Transverse colon (tissue), 4 donors: ENCODE measurements at regions of chr2 and their contacts with region 1.

Region 1: DNA sequence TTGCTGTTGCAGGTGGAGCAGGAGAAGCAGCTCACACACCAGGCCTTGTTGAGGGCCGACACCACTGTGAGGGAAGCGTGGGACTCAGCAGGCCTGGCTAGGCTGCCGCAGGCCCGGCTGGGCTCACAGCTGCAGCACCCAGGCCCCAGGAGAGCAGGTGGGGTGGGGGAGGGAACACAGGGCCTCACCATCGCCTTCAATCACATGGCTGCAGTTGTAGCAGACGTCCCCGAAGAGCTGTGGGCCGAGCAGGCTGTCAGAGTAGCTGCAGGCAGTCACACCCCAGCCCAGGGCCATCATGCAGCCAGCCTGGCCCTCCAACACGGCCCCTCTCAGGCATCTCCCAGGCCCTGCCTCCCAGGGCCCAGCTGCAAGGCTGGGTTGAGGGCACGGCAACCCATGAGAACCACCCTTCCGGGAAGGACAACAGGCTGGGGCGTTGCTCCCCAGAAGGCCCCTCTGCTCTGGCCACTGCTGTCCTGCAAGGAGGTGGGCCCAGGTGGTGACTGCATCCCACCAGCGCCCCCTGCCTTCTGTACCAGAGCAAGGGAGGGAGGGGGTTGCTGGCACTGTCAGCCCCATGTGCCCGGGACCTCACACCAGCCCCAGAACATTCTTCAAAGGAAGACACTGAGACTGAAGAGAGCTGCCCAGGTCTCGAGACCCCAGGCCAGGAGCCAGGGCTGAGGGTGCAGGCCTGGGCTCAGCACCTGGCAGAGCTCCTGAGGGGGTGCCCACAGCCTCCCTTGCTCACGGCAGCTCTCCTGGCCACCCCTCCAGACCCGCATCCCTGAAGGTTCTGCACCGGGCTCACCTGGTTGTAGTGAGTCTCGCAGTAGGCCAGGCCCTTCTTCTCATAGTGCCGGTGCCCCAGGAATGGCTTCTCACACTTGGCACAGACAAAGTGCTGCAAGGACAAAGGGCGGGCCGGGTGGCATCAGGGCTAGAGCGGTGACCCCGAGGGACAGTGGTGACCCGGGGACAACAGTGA is 5.6 kb upstream of the GPR17 start:
- DNase-seq: no peak
- H3K4me3 ChIP-seq: no peak overlapping the region
- H3K27ac ChIP-seq: peak overlapping the region in 3 of 4 donors; percentile 45 to 83 (median 52)
- H3K4me1 ChIP-seq: peaks cover 2 to 26% (median 12%) of the 10 kb centered on the region in 4 donors
- H3K27me3 ChIP-seq: no peaks in the 10 kb centered on the region
- CTCF ChIP-seq: no peak
- EP300 ChIP-seq: no peak
- POLR2A ChIP-seq: no peak

Region 2: DNA sequence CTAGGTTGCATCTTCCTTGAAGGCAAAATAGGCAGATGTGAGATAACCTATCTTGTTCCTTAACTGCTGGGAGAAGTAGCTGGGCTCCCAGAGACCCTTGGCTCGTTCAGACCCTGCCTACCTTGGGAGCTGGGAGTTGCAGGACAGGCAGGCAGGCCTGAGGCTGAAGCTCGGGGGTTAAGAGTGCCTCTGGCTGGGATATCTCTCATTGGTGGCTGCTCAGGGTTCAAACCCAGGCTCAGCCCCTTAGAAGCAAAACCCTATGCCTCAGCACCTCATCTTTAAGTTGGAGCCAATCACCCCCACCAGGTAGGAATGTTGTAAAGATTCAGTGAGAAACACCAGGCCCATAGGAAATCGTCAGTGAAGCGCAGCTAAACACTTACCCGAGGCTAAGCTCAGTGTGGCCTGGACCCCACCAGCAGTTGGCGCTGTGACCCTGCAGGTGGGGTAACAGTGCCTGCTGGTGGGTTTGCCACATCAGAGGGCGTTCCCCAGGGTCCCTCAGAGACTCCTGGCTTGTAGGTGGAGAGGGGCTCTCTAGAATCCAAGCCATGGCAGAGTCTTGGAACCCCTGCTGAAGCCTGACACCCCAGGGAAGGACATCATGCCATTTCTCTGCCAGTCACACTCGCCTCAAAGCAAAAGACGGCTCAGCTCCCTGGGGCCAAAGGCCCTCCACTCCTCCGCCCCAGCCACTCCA is 49.0 kb before region 1 on chr2:
- in situ Hi-C with region 1: no loop called
- intact Hi-C with region 1: no loop called
- DNase-seq: peak; percentile 41
- H3K4me3 ChIP-seq: no peak overlapping the region
- H3K27ac ChIP-seq: no peak overlapping the region
- H3K4me1 ChIP-seq: no peaks in the 10 kb centered on the region
- H3K27me3 ChIP-seq: no peaks in the 10 kb centered on the region
- CTCF ChIP-seq: peak; percentile 47 to 78 (median 63)
- EP300 ChIP-seq: no peak
- POLR2A ChIP-seq: no peak

Region 3: GRCh38 chr2:127701193-127701650 is 60.8 kb after region 1 on chr2 and contains the start of gene SFT2D3:
- in situ Hi-C with region 1: no loop called
- intact Hi-C with region 1: loop called (anchors 1 kb)
- DNase-seq: peak; percentile 95
- H3K4me3 ChIP-seq: peak within 1 kb of the TSS; percentile 55 to 89 (median 67)
- H3K27ac ChIP-seq: peak within 1 kb of the TSS; percentile 93 to 99 (median 96)
- H3K4me1 ChIP-seq: peaks cover 11 to 35% (median 20%) of the 10 kb centered on the region in 4 donors
- H3K27me3 ChIP-seq: no peaks in the 10 kb centered on the region
- CTCF ChIP-seq: peak in 1 of 5 experiments; percentile 14
- EP300 ChIP-seq: no peak
- POLR2A ChIP-seq: peak; percentile 96
- total RNA-seq, gene SFT2D3: 6.8 to 13.7 (median 8.3) TPM